Psoas muscle (tissue), 8 donors: ENCODE measurements at regions of chr3 and their contacts with region 1.

Region 1: DNA sequence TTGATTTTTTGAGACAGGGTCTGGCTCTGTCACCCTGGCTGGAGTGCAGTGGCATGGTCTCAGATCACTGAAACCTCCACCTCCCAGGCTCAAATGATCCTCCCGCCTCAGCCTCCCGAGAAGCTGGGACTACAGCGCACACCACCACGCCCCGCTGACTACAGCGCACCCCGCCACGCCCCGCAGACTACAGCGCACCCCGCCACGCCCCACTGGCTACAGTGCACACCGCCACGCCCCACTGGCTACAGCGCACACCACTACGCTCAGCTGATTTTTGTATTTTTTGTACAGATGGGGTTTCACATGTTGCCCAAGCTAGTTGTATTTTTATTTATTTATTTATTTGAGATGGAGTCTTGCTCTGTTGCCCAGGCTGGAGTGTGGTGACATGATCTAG is 35.6 kb downstream of the SLC51A start:
- DNase-seq: no peak
- ATAC-seq: no peak
- H3K4me3 ChIP-seq: no peak overlapping the region
- H3K27ac ChIP-seq: no peak overlapping the region
- H3K4me1 ChIP-seq: peaks cover 2% of the 10 kb centered on the region
- H3K27me3 ChIP-seq: no peaks in the 10 kb centered on the region
- CTCF ChIP-seq: no peak

Region 2: GRCh38 chr3:196317687-196318467 is 66.0 kb after region 1 on chr3 and contains the start of gene DYNLT2B:
- intact Hi-C with region 1: loop called (anchors 10 kb)
- DNase-seq: peak; percentile 90 to 93
- ATAC-seq: peak; percentile 98 to 99 (median 99)
- H3K4me3 ChIP-seq: peak within 1 kb of the TSS; percentile 72
- H3K27ac ChIP-seq: peak within 1 kb of the TSS; percentile 76
- H3K4me1 ChIP-seq: no peaks in the 10 kb centered on the region
- H3K27me3 ChIP-seq: no peaks in the 10 kb centered on the region
- CTCF ChIP-seq: no peak
- total RNA-seq, gene DYNLT2B: 0.44 to 3.2 (median 2.3) TPM in 3 of 4 donors, not detected in the other

Region 3: DNA sequence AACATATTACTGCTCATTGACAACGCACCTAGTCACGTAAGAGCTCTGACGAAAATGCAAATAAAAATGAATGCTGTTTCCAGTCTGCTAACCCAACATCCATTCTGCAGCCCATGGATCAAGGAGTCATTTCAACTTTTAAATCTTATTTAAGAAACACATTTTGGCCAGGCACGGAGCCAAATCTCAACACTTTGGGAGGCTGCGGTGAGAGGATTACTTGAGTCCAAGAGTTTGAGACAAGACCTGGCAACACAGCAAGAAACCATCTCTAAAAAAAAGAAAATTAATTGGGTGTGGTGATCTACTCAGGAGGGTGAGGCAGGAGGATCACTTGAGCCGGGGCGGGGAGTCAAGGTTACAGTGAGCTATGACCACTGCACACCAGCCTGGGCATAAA is 108.7 kb after region 1 on chr3:
- intact Hi-C with region 1: loop called in 1 of 2 experiments (anchors 10 kb)
- DNase-seq: no peak
- ATAC-seq: no peak
- H3K4me3 ChIP-seq: no peak overlapping the region
- H3K27ac ChIP-seq: no peak overlapping the region
- H3K4me1 ChIP-seq: no peaks in the 10 kb centered on the region
- H3K27me3 ChIP-seq: no peaks in the 10 kb centered on the region
- CTCF ChIP-seq: no peak

Region 4: DNA sequence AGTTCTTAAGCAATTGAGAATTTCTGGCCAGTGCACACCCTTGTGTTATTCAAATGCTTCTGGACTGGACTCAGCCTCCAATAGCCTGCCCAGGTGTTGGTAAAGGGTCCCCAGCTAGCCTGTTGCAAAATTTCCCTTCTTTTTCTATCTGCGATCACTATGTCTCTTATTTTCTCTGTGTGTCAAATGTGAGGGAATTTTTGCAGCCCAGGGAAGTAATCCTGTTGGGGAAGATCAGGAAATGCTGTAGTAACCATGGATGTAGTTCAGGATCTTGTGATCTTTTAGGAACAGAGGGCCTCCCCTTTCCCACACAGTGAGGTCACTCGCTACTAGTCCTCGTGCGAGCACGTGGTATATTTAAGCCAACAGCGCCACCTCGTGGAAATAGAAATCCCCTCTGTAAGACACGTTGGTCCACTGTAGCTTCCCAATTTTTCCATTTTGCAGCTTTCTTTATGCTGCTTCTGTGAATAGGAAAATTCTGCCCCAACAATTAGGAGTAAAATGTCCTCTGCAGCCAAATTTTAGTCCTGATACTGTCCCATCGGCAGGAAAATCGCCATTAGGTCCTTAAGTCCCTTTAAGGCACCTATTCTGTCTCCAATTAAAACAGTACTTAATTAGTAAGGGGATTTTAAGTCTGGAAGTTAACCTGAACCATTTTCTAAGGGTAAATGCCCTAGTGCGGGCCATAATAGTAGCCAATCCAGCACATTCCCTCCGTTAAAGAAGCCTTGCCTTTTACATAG is 267.2 kb after region 1 on chr3:
- intact Hi-C with region 1: loop called (anchors 5 to 10 kb)
- DNase-seq: peak; percentile 53 to 75
- ATAC-seq: peak; percentile 82 to 88 (median 85)
- H3K4me3 ChIP-seq: no peak overlapping the region
- H3K27ac ChIP-seq: no peak overlapping the region
- H3K4me1 ChIP-seq: peaks cover 12% of the 10 kb centered on the region
- H3K27me3 ChIP-seq: no peaks in the 10 kb centered on the region
- CTCF ChIP-seq: peak; percentile 76